Activated naive CD4-positive, alpha-beta T cell treated with anti-CD3 and anti-CD28 coated beads, Interleukin-2, amount 10 ng/mL, durations not matched to agents 7 days and 5 days (primary cell): ENCODE measurements at regions of chr12 and their contacts with region 1.

Region 1: GRCh38 chr12:10562306-10562933 is 51.0 kb downstream of the MAGOHB start:
- DNase-seq: peak; percentile 30
- H3K4me3 Mint-ChIP-seq: no peak overlapping the region
- H3K27ac Mint-ChIP-seq: no peak overlapping the region
- H3K4me1 Mint-ChIP-seq: no peaks in the 10 kb centered on the region
- H3K27me3 Mint-ChIP-seq: peaks cover 20% of the 10 kb centered on the region

Region 2: DNA sequence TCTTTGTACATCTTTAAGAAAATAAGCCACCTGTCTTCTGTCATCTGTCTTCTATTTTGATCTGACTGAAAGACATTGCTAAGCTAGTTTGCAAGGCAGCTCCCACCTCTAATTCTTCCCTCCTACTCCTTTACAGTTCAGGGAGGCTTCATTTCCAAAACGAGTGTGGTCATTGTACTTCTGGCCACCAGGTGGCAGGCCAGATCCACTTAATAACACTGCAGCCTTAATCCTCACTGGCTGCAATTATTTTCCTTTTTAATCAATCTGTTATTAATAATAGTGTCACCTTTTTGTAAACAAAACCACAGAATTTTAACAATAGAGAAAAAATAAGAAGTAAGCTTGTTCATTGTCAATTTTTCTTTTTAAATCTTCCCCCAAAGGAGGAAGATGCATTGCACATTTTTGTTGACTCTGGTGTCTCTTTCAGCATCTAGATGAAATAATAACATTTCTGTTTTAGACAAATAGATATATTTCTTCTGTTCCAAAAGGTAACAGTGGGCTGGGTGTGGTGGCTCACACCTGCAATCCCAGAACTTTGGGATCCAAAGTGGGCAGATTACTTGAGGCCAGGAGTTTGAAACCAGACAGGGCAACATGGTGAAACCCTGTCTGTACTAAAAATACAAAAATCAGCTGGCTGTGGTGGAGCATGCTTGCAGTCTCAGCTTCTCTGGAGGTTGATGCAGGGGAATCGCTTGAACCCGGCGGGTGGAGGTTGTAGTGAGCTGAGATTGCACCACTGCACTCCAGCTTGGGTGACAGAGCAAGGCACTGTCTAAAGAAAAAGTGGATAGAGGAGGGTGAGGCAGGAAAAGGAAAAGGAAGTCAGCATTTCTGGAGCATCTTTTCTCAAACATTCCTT is 326.4 kb before region 1 on chr12:
- CTCF ChIA-PET with region 1: interaction called, 44 read pairs
- DNase-seq: peak; percentile 44
- H3K4me3 Mint-ChIP-seq: no peak overlapping the region
- H3K27ac Mint-ChIP-seq: no peak overlapping the region
- H3K4me1 Mint-ChIP-seq: no peaks in the 10 kb centered on the region
- H3K27me3 Mint-ChIP-seq: peaks cover 27% of the 10 kb centered on the region

Region 3: DNA sequence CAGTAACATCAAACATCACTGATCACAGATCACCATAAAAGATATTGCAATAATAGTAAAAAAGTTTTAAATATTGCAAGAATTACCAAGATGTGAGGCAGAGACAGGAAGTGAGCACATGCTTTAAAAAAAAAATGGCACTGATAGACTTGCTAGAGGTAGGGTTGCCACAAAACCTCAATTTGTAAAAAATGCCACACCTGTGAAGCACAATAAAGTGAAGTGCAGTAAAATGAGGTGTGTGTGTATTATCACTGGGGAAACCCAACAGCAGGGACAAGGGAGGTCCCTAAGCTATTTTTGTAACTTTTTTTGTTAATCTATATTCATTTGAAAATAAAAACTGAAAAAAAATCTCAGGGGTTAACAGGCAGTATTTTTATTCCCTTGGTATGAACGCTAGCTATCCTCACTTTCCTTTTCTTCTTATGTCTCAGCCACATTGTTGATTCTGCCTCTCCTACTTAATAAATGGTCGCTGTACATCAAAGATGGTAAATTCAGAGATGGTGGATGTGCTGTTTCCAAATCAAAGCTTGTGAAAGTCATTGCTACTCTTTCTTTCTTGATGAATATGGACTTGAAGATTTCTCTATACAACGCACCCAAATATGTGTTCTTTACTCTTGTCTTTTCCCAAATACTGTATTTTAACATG is 268.7 kb before region 1 on chr12:
- CTCF ChIA-PET with region 1: no interaction called
- DNase-seq: no peak
- H3K4me3 Mint-ChIP-seq: no peak overlapping the region
- H3K27ac Mint-ChIP-seq: peak overlapping the region; percentile 9
- H3K4me1 Mint-ChIP-seq: peaks cover 16% of the 10 kb centered on the region
- H3K27me3 Mint-ChIP-seq: no peaks in the 10 kb centered on the region

Region 4: DNA sequence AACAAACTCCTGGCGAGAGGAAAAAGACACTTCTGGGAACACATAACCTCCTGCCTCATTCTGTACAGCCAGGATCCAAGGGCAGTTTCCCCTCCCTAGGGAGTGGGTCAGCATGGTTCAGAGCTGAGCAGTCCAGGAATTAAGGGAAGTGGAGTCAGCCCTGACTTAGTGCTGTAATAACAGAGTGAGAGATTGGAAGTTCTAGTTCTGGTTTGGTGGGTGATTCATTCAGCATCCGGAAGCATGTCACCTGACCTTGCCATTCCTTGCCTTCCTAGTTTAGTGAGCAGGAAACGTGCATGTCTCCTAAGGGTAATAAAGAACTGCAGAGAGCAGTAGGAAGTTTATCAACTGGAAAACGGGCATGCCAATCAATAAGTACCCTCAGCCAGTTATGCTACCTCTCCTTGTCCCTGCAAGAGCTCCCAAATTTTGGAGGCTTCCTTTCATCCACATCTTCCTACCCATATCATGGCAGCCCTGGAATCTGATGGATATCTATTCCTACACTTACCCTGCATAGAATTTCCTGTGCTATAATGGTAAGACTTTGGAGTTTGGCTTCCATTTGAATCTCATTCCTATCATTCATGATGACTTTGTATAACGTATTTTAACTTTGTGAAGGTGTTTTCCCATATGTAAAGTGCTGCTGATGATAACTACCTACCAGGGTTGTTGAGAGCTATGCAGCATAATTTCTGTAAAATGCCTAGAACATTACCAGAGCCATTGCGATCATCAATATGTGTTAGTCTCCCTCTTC is 79.5 kb after region 1 on chr12:
- CTCF ChIA-PET with region 1: no interaction called
- DNase-seq: no peak
- H3K4me3 Mint-ChIP-seq: no peak overlapping the region
- H3K27ac Mint-ChIP-seq: no peak overlapping the region
- H3K4me1 Mint-ChIP-seq: no peaks in the 10 kb centered on the region
- H3K27me3 Mint-ChIP-seq: peaks cover 13% of the 10 kb centered on the region